BJ (cell line): ENCODE measurements at regions of chr12 and their contacts with region 1.

Region 1: DNA sequence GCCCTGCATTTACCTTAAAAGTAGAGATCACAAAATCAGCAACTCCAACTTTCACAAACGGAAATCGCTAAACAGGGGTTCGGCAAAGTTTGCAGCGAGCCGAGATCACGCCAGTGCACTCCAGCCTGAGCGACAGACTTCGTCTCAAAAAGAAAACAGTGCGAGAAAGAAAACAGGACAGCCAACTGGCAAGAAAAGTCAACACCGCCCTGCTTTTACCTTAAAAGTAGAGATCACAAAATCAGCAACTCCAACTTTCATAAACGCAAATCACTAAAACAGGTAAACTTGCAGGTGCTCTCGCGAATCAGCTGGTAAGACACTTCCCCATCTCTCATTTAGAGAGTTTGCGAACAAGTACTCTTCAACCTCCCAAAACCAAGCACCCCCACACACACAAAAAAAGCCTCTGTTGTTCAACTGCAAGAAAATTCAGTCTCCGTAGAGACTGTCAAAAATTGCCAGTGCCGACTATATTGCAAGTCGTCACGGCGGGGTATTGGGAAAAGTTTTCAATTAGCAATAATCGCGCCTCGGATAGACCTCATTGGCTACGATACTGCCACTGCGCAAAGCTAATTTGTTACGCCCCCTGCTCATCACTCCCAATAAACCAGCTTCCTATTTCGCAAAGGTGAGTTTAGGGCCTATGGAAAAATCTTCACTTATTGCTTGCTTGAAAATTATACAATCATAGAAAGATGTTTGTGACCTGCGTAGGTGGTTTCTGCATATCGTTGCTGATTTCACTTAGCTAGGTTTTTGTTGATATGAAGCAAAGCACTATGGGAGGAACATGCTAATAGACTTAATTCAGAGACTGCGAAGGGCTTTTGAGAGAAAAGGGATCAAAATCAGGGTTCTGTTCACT is at the start of gene RNU4-1:
- DNase-seq: peak; percentile 59
- H3K4me3 ChIP-seq: peak within 1 kb of the TSS; percentile 47
- H3K27me3 ChIP-seq: no peaks in the 10 kb centered on the region
- CTCF ChIP-seq: no peak
- polyA plus RNA-seq, gene RNU4-1: not detected in 2 replicates

Region 2: GRCh38 chr12:120119271-120119973 is 173.5 kb before region 1 on chr12:
- CTCF ChIA-PET with region 1: no interaction called
- POLR2A ChIA-PET with region 1: interaction called, 12 read pairs
- DNase-seq: peak; percentile 9
- H3K4me3 ChIP-seq: no peak overlapping the region
- H3K27me3 ChIP-seq: no peaks in the 10 kb centered on the region
- CTCF ChIP-seq: no peak

Region 3: DNA sequence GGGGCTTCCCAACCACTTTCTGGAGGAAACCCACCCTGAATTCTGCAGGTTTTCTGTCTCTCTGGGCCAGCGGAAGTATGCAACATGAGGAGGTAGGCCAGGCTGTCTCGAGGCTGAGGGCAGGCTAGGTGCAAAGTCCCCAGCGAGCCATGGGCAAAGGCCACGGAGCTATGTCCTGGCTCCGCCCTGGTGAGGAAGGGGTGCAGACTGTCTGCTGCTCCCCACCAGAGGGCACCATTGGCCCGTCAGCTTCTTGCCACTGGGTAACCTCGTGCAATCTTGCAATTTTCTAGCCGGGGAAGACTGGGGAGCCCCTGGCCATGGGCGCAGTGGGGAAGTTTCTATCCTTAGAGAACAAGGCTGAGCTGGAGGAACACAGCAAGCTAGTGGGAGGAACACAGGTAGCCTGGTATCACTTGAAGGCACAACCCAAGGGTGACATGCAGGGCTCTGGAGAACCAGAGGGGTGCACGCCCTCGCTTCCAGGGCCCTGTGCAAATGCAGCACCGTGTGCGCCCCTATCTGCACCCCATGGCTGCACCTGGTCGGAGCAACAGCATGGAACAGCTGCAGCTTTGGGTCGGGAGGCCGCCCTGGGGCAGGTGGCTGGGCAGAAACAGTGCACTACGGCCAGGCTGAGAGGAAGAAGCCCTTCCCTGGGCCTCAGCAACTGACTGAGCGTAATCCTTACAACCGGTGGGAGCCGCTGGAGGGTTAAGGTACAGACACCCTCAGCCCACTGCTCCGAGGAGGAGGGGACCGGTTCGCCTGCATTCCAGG is 64.4 kb before region 1 on chr12:
- CTCF ChIA-PET with region 1: interaction called, 46 read pairs
- POLR2A ChIA-PET with region 1: interaction called, 33 read pairs
- DNase-seq: no peak
- H3K4me3 ChIP-seq: no peak overlapping the region
- H3K27me3 ChIP-seq: no peaks in the 10 kb centered on the region
- CTCF ChIP-seq: peak; percentile 91

Region 4: GRCh38 chr12:120234643-120235368 is 58.1 kb before region 1 on chr12:
- CTCF ChIA-PET with region 1: interaction called, 46 read pairs
- POLR2A ChIA-PET with region 1: interaction called, 33 read pairs
- DNase-seq: peak; percentile 95
- H3K4me3 ChIP-seq: no peak overlapping the region
- H3K27me3 ChIP-seq: no peaks in the 10 kb centered on the region
- CTCF ChIP-seq: peak; percentile 61

Region 5: GRCh38 chr12:120257041-120257821 is 35.7 kb before region 1 on chr12:
- CTCF ChIA-PET with region 1: no interaction called
- POLR2A ChIA-PET with region 1: interaction called, 14 read pairs
- DNase-seq: peak; percentile 80
- H3K4me3 ChIP-seq: no peak overlapping the region
- H3K27me3 ChIP-seq: no peaks in the 10 kb centered on the region
- CTCF ChIP-seq: no peak

Region 6: GRCh38 chr12:120317224-120318105 is 24.6 kb after region 1 on chr12:
- CTCF ChIA-PET with region 1: interaction called, 3 read pairs
- POLR2A ChIA-PET with region 1: interaction called, 27 read pairs
- DNase-seq: peak; percentile 95
- H3K4me3 ChIP-seq: peak overlapping the region; percentile 70
- H3K27me3 ChIP-seq: no peaks in the 10 kb centered on the region; the same call in 1 of the 2 replicates
- CTCF ChIP-seq: peak; percentile 84

Region 7: GRCh38 chr12:120367233-120367923 is 74.5 kb after region 1 on chr12:
- CTCF ChIA-PET with region 1: no interaction called
- POLR2A ChIA-PET with region 1: no interaction called
- DNase-seq: no peak
- H3K4me3 ChIP-seq: no peak overlapping the region
- H3K27me3 ChIP-seq: peaks cover 48% of the 10 kb centered on the region
- CTCF ChIP-seq: peak; percentile 31; the same call in 1 of the 2 replicates